MCF 10A (cell line): ENCODE measurements at regions of chr21 and their contacts with region 1.

Region 1: GRCh38 chr21:38831526-38832467 is 26.1 kb downstream of the ETS2 start:
- DNase-seq: peak; percentile 99
- H3K4me3 Mint-ChIP-seq: peak overlapping the region; percentile 7
- H3K27ac Mint-ChIP-seq: peak overlapping the region; percentile 90
- H3K4me1 Mint-ChIP-seq: peaks cover 24% of the 10 kb centered on the region
- H3K27me3 Mint-ChIP-seq: no peaks in the 10 kb centered on the region
- CTCF ChIP-seq: no peak

Region 2: GRCh38 chr21:38811257-38811656 is 20.5 kb before region 1 on chr21:
- CTCF ChIA-PET with region 1: interaction called, 5 read pairs
- POLR2A ChIA-PET with region 1: interaction called, 54 read pairs
- intact Hi-C with region 1: loop called (anchors 2 kb)
- DNase-seq: peak; percentile 96
- H3K4me3 Mint-ChIP-seq: peak overlapping the region; percentile 97
- H3K27ac Mint-ChIP-seq: peak overlapping the region; percentile 83
- H3K4me1 Mint-ChIP-seq: peaks cover 33% of the 10 kb centered on the region
- H3K27me3 Mint-ChIP-seq: no peaks in the 10 kb centered on the region
- CTCF ChIP-seq: no peak

Region 3: DNA sequence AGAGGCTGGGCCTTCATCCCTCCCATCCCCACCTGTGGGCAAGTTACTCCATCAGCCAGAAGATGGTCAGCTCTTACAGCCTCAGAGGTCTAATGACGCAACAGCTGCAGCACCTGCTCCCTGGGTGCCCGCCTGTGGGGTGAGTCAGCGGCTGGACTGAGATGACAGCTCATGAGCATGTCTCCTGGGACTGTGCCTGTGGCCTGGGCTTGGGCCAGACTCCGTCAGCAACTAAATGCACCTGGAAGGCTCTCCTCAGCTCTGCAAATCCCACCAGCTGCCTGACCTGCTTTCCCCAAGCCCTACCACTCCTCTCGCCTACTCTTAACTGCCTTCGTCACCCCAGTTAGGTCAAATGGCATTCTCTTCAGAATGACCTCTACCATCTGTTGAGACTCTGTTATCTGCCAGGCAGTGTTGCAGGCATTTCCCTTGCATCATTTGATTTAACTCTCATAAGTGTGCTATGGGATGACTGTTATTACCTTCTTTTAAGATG is 21.7 kb after region 1 on chr21:
- CTCF ChIA-PET with region 1: no interaction called
- POLR2A ChIA-PET with region 1: interaction called, 14 read pairs
- intact Hi-C with region 1: no loop called
- DNase-seq: peak; percentile 99
- H3K4me3 Mint-ChIP-seq: no peak overlapping the region
- H3K27ac Mint-ChIP-seq: peak overlapping the region; percentile 40
- H3K4me1 Mint-ChIP-seq: peaks cover 34% of the 10 kb centered on the region
- H3K27me3 Mint-ChIP-seq: no peaks in the 10 kb centered on the region
- CTCF ChIP-seq: no peak

Region 4: GRCh38 chr21:38925923-38926322 is 94.1 kb after region 1 on chr21:
- CTCF ChIA-PET with region 1: no interaction called
- POLR2A ChIA-PET with region 1: interaction called, 14 read pairs
- intact Hi-C with region 1: no loop called
- DNase-seq: peak; percentile 79
- H3K4me3 Mint-ChIP-seq: no peak overlapping the region
- H3K27ac Mint-ChIP-seq: peak overlapping the region; percentile 76
- H3K4me1 Mint-ChIP-seq: peaks cover 18% of the 10 kb centered on the region
- H3K27me3 Mint-ChIP-seq: no peaks in the 10 kb centered on the region
- CTCF ChIP-seq: no peak

Region 5: DNA sequence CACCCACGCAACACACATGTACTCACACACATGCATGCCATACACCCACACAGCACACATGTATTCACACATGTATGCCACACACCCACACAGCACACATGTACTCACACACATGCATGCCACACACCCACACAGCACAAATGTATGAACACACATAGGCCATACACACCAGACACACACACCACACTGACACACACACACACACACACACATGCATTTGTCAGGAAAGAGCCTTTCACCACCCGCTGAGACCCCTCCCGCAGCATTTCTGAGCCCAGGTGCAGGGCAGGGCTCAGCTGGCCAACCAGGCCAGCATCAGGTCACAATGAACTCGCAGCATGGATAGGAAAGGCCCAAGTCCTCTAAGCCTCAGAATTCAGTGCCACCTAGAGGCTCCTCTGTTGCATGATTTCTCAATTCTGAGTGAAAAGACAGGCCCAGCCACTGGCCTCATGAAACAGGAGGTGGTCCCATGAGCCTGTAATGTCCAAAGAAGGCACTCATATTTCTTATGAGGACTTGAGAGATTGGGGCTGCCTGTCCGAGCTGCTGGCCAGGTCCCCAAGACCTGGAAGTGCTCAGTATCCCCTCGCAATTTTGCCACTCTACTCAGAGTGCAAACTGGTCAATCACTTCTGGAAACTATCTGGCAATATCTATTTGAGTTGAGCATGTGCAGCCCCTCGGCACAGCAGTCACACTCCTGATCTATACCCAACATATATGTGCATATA is 294.1 kb after region 1 on chr21:
- CTCF ChIA-PET with region 1: interaction called, 3 read pairs
- POLR2A ChIA-PET with region 1: interaction called, 14 read pairs
- intact Hi-C with region 1: no loop called
- DNase-seq: peak; percentile 78
- H3K4me3 Mint-ChIP-seq: no peak overlapping the region
- H3K27ac Mint-ChIP-seq: peak overlapping the region; percentile 59
- H3K4me1 Mint-ChIP-seq: peaks cover 6% of the 10 kb centered on the region
- H3K27me3 Mint-ChIP-seq: no peaks in the 10 kb centered on the region
- CTCF ChIP-seq: peak; percentile 72